ENCODE measurements at regions of chr1 and their contacts with region 1.

Region 1: DNA sequence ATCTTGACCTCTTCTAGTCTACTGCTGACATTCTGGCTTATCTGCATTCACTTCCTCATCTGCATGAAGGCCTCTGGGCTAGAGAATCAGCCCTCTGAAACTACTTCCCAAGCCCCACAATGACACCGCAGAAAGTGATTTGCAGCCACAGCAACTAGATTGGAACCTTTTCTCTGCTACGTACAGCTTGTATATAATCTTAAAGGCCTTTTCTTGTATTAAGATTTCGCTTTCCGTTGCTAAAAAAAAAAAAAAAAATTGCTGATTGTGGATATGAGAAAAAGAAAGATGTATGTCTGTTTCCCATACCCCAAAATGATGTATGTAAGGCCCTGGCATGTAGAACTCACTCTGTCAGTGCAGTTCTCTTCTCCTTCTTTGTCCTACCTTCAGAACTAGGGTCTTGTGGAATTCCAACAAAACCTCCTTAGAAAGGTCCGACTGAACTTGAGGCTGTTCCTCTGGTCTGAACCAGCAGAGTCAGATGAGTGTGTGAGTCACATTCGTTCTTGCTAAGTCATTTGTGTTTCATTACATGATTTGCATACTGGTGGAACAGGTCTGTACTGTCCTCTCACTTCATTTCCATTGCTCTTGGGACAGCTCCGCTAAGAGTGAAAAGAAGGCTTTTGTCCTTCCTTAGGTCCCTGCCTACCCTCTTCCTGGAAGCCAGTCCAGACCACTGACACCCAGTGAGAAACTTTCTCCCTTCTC is 62.7 kb downstream of the PLPP3 start:
- DNase-seq: no peak
- ATAC-seq: peak; percentile 94
- H3K4me3 Mint-ChIP-seq: peak overlapping the region; percentile 77
- H3K27ac Mint-ChIP-seq: peak overlapping the region; percentile 87
- H3K4me1 Mint-ChIP-seq: peaks cover 26% of the 10 kb centered on the region
- H3K27me3 Mint-ChIP-seq: no peaks in the 10 kb centered on the region
- CTCF ChIP-seq: no peak

Region 2: GRCh38 chr1:56472860-56473259 is 43.8 kb before region 1 on chr1:
- CTCF ChIA-PET with region 1: no interaction called
- POLR2A ChIA-PET with region 1: interaction called, 3 read pairs
- intact Hi-C with region 1: loop called (anchors 2 kb)
- DNase-seq: peak; percentile 17
- ATAC-seq: peak; percentile 92
- H3K4me3 Mint-ChIP-seq: peak overlapping the region; percentile 55
- H3K27ac Mint-ChIP-seq: peak overlapping the region; percentile 61
- H3K4me1 Mint-ChIP-seq: peaks cover 57% of the 10 kb centered on the region
- H3K27me3 Mint-ChIP-seq: peaks cover 9% of the 10 kb centered on the region
- CTCF ChIP-seq: no peak

Region 3: GRCh38 chr1:57550092-57550491 is 1033.4 kb after region 1 on chr1:
- CTCF ChIA-PET with region 1: no interaction called
- POLR2A ChIA-PET with region 1: no interaction called
- intact Hi-C with region 1: no loop called
- DNase-seq: no peak
- ATAC-seq: no peak
- H3K4me3 Mint-ChIP-seq: no peak overlapping the region
- H3K27ac Mint-ChIP-seq: no peak overlapping the region
- H3K4me1 Mint-ChIP-seq: no peaks in the 10 kb centered on the region
- H3K27me3 Mint-ChIP-seq: no peaks in the 10 kb centered on the region
- CTCF ChIP-seq: no peak

Measured in activated B cell treated with CpG ODN at 0.5 μM for 24 hours (primary cell).